GM10248 (cell line): ENCODE measurements at regions of chr15 and their contacts with region 1.

Region 1: DNA sequence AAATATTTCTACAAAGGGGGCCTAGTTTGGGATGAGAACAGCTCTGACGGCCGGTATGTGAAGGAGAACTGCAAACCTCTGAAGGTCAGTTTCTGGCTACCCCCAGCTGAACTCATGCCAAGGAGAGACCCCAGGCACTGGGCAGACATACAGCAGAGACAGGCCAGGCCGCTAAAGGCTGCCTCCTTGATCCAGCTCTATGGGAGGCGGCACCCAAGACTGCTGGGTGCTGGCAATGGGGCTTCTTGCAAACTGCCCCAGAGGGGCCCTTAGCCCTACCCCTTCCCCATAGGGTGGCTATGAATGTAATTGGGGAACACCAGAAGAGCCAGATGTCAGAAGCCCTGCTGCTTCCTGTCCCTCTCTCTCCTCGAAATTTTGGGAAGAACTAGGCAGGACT is 13.3 kb downstream of the CLK3 start:
- DNase-seq: no peak
- CTCF ChIP-seq: no peak

Region 2: DNA sequence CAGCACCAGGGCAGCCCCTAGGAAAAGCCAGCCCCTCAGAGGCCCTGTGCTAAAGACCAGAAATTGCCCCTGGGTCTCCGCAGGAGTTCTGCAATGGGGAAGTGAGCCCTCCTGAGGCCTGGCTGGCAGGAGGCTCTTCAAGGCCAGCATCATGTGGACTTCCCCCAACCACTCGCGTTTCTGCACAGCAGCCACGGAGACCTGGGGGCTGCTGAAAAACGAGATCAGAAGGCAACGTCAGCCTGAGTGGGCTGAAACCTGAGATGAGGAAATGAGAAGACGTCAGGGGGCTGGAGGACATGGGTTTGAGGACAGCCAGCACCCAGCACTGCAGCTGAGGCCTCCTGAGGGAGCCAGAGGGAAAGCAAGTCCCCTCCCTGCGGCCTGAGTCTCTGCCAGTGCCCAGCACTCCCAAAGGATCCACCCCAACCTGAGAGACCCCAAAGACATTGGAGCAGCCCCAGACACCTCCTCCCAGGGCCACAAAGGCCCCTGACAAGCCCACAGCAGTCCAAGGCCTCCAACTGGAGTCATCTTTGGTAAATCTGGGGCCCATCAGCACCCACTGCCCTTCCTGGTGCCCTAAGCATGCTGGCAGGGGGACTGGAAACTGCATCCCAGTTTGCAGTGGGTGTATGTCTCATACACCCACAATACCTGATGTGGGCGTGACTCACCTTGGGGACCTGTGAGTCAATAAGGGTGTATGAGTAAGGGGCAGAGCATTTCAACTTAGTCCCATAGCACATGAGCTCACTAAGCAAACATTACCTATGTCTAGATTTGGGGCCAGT is 232.3 kb before region 1 on chr15:
- CTCF ChIA-PET with region 1: no interaction called
- POLR2A ChIA-PET with region 1: no interaction called
- DNase-seq: peak; percentile 84
- CTCF ChIP-seq: peak; percentile 25

Region 3: DNA sequence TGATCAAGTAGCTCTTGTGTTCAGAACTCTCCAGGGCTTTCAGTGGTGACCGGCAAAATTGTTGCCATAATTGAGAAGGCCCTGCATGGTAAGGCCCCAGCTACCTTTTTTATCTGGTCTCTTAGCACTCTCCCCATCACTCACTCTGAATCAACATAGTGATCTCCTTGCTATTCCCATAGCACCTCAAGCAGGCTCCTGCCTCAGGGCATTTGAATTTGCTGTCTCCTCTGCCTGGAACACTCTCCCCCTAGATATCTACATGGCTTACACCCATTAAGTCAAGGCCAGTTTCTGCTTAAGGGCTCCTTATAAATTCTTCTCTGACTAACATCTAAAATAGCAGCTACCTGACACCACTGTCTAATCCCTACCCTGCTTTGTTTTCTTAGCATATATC is 91.2 kb before region 1 on chr15:
- CTCF ChIA-PET with region 1: no interaction called
- POLR2A ChIA-PET with region 1: no interaction called
- DNase-seq: no peak
- CTCF ChIP-seq: no peak

Region 4: DNA sequence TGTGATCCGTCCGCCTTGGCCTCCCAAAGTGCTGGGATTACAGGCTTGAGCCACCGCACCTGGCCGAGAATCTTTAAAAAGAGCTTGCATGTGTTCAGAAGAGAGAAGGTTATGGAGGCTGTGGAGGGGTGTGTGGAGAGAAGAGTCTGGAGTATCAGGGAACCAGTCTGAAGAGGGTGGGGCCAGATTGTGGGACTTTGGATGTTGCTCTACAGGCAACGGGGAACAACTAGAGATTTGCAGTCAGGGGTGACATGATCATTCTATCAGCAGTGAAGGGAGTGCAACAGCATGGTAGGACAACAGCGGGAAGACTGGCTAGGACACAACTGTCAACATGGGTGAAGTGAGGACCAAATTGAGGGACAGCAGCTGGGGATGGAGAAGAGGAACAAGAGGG is 235.3 kb after region 1 on chr15:
- CTCF ChIA-PET with region 1: no interaction called
- POLR2A ChIA-PET with region 1: interaction called, 10 read pairs
- DNase-seq: no peak
- CTCF ChIP-seq: no peak